ENCODE measurements at regions of chr10 and their contacts with region 1.

Region 1: GRCh38 chr10:79202188-79203013 is 133.6 kb downstream of the ZMIZ1 start:
- DNase-seq: peak in 3 of 5 donors; percentile 56 to 68 (median 63)
- ATAC-seq: peak in 3 of 4 donors; percentile 31 to 71 (median 59)
- H3K4me3 ChIP-seq: no peak overlapping the region
- H3K27ac ChIP-seq: peak overlapping the region in 4 of 12 donors; percentile 1 to 62 (median 11)
- H3K4me1 ChIP-seq: peaks cover 0 to 38% (median 11%) of the 10 kb centered on the region in 12 donors
- H3K27me3 ChIP-seq: no peaks in the 10 kb centered on the region
- CTCF ChIP-seq: peak; percentile 25 to 58 (median 48)
- POLR2A ChIP-seq: no peak

Region 2: GRCh38 chr10:77494327-77494726 is 1708.1 kb before region 1 on chr10:
- intact Hi-C with region 1: no loop called
- DNase-seq: no peak
- ATAC-seq: no peak
- H3K4me3 ChIP-seq: no peak overlapping the region
- H3K27ac ChIP-seq: no peak overlapping the region
- H3K4me1 ChIP-seq: peaks cover 0 to 6% (median 0%) of the 10 kb centered on the region in 12 donors
- H3K27me3 ChIP-seq: no peaks in the 10 kb centered on the region
- CTCF ChIP-seq: peak in 8 of 12 donors; percentile 10 to 43 (median 18)
- POLR2A ChIP-seq: no peak

Region 3: DNA sequence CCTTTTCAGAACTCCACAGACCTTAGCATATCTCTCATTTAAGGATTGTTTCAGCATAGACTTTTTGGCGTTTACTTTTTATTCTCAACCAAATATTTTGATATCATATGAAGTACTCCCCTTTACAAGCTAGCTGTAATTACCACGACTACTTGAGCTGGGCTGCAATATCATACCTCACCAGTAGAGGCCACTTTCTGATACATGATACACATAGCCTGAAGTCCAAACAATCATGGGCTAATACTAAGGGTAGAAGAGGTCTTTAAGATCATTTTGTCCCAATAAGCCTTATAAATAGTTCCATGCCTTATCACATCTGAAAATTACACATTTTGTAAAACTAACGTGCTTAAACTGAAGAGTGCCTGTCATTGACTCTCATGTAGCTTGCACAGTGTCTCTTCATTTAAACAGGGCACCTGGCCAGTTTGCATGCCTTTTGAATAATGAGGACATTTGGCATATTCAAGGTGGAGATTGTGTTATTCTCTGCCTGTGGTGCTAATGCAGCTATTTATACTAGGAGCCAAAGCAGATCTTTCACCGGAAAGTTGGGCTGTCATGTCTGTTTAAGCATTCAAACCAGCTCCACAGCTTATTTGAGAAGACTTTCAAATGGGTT is 537.4 kb before region 1 on chr10:
- intact Hi-C with region 1: loop called in 2 of 10 experiments (anchors 10 kb)
- DNase-seq: no peak
- ATAC-seq: no peak
- H3K4me3 ChIP-seq: no peak overlapping the region
- H3K27ac ChIP-seq: no peak overlapping the region
- H3K4me1 ChIP-seq: no peaks in the 10 kb centered on the region
- H3K27me3 ChIP-seq: no peaks in the 10 kb centered on the region
- CTCF ChIP-seq: peak; percentile 17 to 56 (median 40)
- POLR2A ChIP-seq: no peak

Region 4: DNA sequence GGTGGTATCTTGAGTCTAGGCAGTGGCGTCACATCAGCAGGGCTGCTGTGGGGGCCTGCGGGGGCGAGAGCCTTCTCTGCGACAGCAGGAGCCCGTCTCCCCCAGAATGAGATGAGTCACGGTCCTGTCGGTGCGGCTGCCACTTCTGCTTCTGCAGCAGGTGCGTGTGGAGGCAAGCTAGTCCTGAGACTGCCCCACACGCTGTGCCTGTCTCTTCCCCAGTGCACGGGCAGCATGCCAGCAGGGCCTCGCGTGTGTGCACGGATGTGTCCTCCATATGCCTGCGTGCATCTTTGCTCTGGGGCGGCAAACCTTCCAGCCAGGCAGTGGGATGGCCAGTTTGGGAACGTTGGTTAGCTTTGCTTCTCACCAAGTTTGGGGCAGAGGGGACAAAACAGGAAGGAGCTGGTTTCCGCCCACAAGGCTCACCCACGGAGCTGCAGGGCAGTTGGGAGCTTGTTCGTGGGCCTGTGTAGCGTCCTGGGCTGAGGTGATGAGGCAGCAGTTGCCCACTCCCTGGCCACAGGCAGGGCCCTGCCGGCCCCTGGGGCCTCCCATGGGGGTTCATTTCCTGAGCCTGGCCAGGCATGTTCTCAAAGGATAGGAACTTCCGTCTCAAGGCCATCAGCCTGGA is 84.0 kb after region 1 on chr10:
- intact Hi-C with region 1: no loop called
- DNase-seq: peak; percentile 64 to 91 (median 74)
- ATAC-seq: peak in 3 of 4 donors; percentile 41 to 65 (median 52)
- H3K4me3 ChIP-seq: peak overlapping the region in 1 of 12 donors; percentile 5
- H3K27ac ChIP-seq: peak overlapping the region in 11 of 12 donors; percentile 31 to 89 (median 49)
- H3K4me1 ChIP-seq: peaks cover 6 to 65% (median 38%) of the 10 kb centered on the region in 12 donors
- H3K27me3 ChIP-seq: no peaks in the 10 kb centered on the region
- CTCF ChIP-seq: no peak
- POLR2A ChIP-seq: no peak